Cardiac septum (tissue), 1 donor: ENCODE measurements at regions of chr12 and their contacts with region 1.

Region 1: DNA sequence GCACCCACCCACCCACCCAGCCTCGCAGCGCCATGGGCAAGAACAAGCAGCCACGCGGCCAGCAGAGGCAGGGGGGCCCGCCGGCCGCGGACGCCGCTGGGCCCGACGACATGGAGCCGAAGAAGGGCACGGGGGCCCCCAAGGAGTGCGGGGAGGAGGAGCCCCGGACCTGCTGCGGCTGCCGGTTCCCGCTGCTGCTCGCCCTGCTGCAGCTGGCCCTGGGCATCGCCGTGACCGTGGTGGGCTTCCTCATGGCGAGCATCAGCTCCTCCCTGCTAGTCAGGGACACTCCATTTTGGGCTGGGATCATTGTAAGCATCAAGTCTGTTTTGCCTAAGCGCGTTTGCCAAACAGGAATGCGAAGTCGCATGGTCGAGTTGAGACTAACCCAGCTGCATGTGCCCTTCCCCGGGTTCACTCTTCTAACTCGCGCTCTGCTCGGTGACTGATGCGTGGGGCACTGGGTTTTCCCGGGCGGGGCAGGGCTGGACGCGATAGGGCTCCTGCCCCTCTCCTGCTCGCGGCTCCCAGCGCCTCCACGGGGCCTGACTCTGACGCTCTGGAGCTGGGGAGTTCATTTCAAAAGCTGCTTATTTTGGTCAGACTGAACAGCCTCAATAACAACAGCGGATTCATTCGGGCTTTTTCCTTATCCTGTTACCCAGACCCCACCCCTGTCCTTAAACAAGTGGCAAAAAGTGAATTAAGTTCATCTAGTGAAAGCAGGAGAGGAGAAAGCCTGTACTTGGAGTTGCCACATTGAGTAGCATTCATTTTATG is 458 bp downstream of the SSPN start:
- DNase-seq: peak; percentile 80

Region 2: DNA sequence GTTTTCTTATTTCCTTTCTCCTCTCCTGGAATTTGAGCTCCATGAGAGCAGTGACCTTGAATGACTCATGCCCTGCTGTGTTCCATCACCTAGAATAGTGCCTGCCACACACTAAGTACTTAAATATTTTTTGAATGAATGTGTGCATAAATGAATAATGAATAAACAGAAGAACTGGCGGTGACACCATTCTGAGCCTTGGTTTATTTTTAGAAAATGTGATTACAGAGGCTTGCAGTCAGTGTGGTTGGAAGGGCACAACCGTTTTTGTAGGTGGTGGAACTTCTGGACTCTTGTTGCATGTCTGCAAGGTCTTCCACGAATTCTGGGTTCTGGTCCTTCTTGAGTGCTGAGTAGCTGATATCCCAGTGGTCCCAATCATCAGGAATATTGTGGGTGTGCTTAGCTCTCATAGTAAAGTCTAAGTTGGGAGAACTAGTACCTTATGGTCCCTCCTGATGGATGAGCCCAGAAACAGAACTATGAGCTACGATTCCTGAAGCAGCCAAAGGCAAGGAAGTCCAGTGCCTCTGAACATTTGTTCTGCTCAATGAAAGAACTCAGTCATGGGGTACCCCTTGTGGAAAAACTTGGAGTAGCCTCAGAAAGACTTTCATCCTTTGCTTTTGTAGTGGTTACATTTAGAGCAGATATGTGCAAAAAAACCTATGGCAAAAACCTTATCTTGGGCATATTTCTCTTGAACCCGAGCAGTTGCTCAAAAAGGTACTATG is 42.2 kb before region 1 on chr12:
- intact Hi-C with region 1: loop called (anchors 5 kb)
- DNase-seq: no peak